ENCODE measurements at regions of chr12 and their contacts with region 1.

Region 1: GRCh38 chr12:106955377-106956047 is at the start of gene TMEM263:
- DNase-seq: peak; percentile 97
- total RNA-seq, gene TMEM263: 44.8 TPM

Region 2: DNA sequence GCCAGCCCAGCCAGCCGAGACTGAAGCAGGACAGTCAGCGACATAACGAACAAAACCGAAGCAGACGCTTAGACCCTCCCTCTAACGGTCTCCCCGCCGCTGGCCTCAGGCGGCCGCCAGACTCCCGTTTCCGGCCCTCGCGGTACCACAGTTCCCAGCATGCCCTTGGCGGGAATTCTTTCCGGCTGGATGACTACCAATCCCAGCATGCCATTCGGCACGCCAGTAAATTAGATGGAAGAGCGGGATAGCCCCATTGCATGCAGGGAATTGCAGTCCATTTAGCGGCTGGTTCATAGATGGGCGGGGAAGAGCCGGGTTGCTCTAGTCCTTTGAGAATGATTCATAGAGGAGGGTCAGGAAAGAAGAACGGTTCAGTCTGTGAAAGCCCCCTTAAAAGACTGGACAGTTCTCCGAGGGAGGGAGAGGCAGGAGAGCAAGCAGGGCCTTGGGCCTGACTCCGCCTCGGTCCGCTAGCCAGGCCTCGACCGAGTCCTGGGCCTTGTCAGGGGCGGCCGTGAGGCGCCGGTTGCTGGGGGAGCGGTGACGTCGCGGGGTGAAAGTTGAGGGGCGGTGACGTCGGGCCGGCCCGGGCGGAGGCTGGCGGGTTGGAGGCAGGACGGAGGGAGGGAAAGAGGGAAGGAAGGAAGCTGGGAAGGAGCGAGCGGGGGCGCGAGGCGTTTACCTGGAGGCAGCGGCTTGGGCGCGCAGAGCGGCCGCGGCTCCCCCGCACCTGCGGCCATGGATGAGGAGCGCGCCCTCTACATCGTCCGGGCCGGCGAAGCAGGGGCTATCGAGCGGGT is 181.3 kb before region 1 on chr12 and contains the start of gene RIC8B:
- intact Hi-C with region 1: loop called (anchors 2 kb)
- DNase-seq: peak; percentile 96
- total RNA-seq, gene RIC8B: 23.5 TPM

Region 3: DNA sequence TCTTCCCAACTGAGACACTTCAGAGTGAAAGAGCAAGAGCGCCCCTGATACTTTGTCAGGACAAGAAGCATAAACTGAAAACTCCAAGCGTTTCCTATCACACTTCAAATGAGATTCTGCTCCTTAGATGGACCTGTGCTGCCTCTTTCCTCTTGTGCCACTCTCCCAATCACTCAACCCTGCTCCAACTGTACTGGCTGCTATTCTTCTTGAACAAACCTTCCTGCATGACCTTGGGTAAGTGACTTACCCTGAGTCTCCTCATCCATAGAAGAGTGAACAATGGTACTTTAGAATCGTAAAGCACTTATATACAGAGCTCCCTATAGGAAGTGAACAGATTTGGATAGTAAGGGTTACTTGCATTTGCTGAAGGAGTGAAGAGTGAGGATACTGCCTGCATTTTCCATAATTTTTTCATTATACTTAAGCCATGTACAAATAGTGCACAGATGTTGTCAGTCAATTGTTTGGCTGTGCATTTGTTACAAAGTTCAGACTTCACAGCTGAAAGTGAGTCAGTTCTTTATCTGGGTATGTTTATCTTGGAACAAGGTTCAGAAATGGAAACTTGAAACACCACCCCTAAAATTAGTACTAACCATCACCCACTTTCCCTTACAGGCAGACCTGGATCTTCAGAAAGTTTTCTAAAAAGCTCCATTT is 20.6 kb after region 1 on chr12:
- intact Hi-C with region 1: loop called (anchors 2 kb)
- DNase-seq: no peak

Region 4: DNA sequence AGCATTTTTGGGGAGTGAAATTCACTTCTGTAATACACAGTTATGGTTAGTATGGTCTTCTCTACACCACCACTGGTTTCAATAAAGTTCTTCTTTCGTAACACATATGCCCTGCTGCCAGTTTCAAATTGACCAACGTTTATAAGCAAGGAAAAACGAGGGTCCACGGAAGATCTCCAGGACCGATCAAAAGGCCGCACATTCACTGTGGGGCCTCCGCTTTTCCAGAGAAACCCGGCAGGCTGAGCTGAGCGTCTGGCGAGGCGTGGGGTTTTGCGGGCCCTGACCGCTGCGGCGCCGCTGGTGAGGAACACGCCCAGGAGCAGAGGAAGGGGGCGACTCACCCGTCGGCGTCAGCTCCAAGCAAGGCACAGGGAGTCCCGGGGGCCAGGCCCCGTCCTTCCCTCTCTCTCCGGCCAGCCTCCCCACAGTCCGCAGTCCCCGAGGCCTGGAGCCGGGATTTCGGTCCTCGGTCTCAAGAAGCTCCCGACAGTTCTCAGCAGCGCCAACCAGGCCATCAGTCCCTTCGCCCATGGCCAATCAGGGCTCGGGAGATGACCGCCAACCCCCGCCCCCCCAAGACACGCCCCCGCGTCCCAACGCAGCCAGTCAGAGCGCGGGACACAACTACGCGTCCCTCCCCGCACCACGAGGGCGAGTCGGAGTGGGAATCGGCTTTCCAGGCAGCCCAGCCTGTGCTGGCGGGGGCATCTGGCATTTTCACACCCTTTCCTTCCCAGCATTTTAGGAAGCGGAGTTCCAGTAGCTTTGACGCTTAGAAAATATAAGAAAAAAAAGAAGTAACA is 31.3 kb after region 1 on chr12 and contains the start of gene MTERF2:
- intact Hi-C with region 1: loop called (anchors 2 kb)
- DNase-seq: peak; percentile 97
- total RNA-seq, gene MTERF2: 21.6 TPM

Region 5: GRCh38 chr12:107093417-107094182 is 138.1 kb after region 1 on chr12 and contains the start of gene CRY1:
- intact Hi-C with region 1: loop called (anchors 2 kb)
- DNase-seq: peak; percentile 97
- total RNA-seq, gene CRY1: 12.0 TPM

Region 6: GRCh38 chr12:107317751-107318613 is 362.5 kb after region 1 on chr12:
- intact Hi-C with region 1: no loop called
- DNase-seq: peak; percentile 88

Measured in cardiac septum (tissue), 1 donor.